ENCODE measurements at regions of chr15 and their contacts with region 1.

Region 1: GRCh38 chr15:85618956-85619491 is 175.7 kb downstream of the KLHL25 start:
- DNase-seq: peak; percentile 45 to 76 (median 61)
- H3K4me3 ChIP-seq: peak overlapping the region; percentile 17 to 36
- H3K4me3 Mint-ChIP-seq: no peak overlapping the region
- H3K27ac ChIP-seq: peak overlapping the region; percentile 57
- H3K27ac Mint-ChIP-seq: no peak overlapping the region
- H3K4me1 ChIP-seq: peaks cover 68% of the 10 kb centered on the region
- H3K4me1 Mint-ChIP-seq: peaks cover 31 to 46% (median 36%) of the 10 kb centered on the region in 4 donors
- H3K27me3 ChIP-seq: no peaks in the 10 kb centered on the region
- H3K27me3 Mint-ChIP-seq: no peaks in the 10 kb centered on the region

Region 2: DNA sequence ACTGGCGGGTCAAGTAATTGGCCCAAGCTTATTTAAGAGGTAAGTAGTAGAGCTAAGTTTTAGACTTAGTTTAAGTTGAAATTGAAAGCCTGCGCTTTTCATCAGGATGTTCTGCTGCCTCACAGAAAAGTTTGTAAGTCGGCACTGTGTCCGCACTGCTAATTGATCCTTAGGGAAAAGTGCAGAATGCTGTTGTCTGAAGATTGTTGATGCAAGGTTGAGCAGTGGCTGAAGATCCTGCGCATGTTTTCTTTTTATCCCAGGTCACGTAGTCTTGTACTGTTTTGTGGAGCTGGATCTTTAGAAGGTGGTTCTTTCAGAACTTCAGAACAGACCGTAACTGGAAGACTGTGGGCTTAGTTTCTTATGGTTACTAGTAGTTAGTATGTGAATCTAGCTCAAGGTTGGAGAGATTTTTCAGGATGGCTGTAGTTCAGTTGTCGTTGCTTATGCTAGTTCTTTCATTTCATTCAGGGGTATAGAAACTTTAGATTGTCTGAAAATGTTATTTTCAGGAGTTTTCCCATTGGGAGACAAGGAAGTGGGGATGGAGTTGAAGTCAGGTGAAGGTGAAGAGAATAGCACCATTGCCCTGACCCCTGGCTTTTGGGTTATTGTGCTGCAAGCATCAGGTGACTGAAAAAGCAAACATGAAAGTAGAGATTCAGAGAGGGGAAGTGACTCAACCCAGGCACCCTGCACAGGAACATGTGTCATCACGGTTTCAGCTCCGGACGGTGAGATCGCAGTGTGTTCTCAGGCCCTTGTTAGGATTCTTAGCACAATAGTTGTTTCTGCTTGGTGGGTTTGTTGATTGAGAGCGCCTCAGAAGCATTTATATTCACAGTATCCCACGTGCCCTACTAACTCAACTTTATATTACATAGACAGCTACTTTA is 205.8 kb before region 1 on chr15:
- CTCF ChIA-PET with region 1: no interaction called
- POLR2A ChIA-PET with region 1: no interaction called
- intact Hi-C with region 1: loop called (anchors 2 kb)
- DNase-seq: peak; percentile 45 to 86 (median 54)
- H3K4me3 ChIP-seq: no peak overlapping the region
- H3K4me3 Mint-ChIP-seq: peak overlapping the region in 7 of 8 donors; percentile 47 to 87 (median 65)
- H3K27ac ChIP-seq: peak overlapping the region; percentile 40
- H3K27ac Mint-ChIP-seq: peak overlapping the region; percentile 78 to 96 (median 92)
- H3K4me1 ChIP-seq: peaks cover 32% of the 10 kb centered on the region
- H3K4me1 Mint-ChIP-seq: peaks cover 50 to 75% (median 58%) of the 10 kb centered on the region in 4 donors
- H3K27me3 ChIP-seq: no peaks in the 10 kb centered on the region
- H3K27me3 Mint-ChIP-seq: no peaks in the 10 kb centered on the region

Region 3: DNA sequence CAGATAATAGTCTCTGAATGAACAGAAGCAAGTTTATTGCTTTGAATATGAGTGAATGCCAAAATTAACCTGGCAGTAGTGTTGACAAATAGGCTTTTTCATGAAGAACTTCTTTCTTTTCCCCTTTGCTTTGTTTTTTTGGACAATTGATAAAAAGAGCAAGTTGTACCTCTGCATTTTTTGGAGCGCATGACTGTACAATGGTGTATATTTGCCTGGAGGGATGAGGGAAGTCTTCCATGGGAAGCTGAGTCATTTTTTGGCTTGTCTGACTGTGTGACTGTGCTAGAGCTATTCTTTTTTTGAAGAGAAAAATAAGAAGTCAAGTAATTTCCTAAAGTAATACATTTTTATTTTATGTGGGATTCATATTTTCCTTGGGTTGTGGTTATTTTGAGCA is 11.2 kb before region 1 on chr15:
- CTCF ChIA-PET with region 1: interaction called, 20 read pairs
- POLR2A ChIA-PET with region 1: interaction called, 7 read pairs
- intact Hi-C with region 1: no loop called
- DNase-seq: no peak
- H3K4me3 ChIP-seq: no peak overlapping the region
- H3K4me3 Mint-ChIP-seq: no peak overlapping the region
- H3K27ac ChIP-seq: no peak overlapping the region
- H3K27ac Mint-ChIP-seq: peak overlapping the region in 2 of 7 donors; percentile 65 to 85
- H3K4me1 ChIP-seq: peaks cover 18% of the 10 kb centered on the region
- H3K4me1 Mint-ChIP-seq: peaks cover 23 to 35% (median 30%) of the 10 kb centered on the region in 4 donors
- H3K27me3 ChIP-seq: no peaks in the 10 kb centered on the region
- H3K27me3 Mint-ChIP-seq: no peaks in the 10 kb centered on the region

Region 4: DNA sequence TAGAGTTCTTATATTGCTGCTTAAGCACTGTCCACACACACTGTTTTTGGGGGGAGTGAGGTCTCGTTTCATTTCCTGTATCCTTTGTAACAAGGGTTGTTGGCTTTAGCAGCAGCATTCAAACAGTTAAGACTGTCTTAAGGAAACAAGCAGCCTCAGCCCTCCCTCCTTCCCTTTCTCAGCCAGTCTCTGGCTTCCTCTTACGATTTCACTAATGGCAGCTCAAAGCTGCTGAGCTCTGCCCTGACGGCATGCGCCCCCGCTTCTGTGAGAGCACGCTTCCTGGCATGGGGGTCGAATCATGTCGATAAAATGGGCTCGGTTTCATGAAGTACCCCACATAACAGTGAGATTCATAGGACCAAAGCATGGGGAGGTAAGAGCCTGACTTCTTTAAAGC is 70.7 kb after region 1 on chr15:
- CTCF ChIA-PET with region 1: interaction called, 27 read pairs
- POLR2A ChIA-PET with region 1: interaction called, 72 read pairs
- intact Hi-C with region 1: loop called (anchors 1 kb)
- DNase-seq: peak; percentile 65 to 77 (median 71)
- H3K4me3 ChIP-seq: peak overlapping the region; percentile 71 to 80
- H3K4me3 Mint-ChIP-seq: peak overlapping the region; percentile 96 to 100 (median 98)
- H3K27ac ChIP-seq: peak overlapping the region; percentile 83
- H3K27ac Mint-ChIP-seq: peak overlapping the region; percentile 96 to 100 (median 98)
- H3K4me1 ChIP-seq: peaks cover 73% of the 10 kb centered on the region
- H3K4me1 Mint-ChIP-seq: peaks cover 59 to 75% (median 64%) of the 10 kb centered on the region in 4 donors
- H3K27me3 ChIP-seq: no peaks in the 10 kb centered on the region
- H3K27me3 Mint-ChIP-seq: no peaks in the 10 kb centered on the region

Region 5: GRCh38 chr15:85707519-85708338 is 88.7 kb after region 1 on chr15:
- CTCF ChIA-PET with region 1: interaction called, 9 read pairs
- POLR2A ChIA-PET with region 1: interaction called, 60 read pairs
- intact Hi-C with region 1: loop called (anchors 1 kb)
- DNase-seq: peak in 2 of 5 donors; percentile 55 to 73
- H3K4me3 ChIP-seq: peak overlapping the region; percentile 42 to 61
- H3K4me3 Mint-ChIP-seq: peak overlapping the region; percentile 83 to 95 (median 87)
- H3K27ac ChIP-seq: peak overlapping the region; percentile 86
- H3K27ac Mint-ChIP-seq: peak overlapping the region; percentile 96 to 100 (median 97)
- H3K4me1 ChIP-seq: peaks cover 72% of the 10 kb centered on the region
- H3K4me1 Mint-ChIP-seq: peaks cover 69 to 89% (median 80%) of the 10 kb centered on the region in 4 donors
- H3K27me3 ChIP-seq: no peaks in the 10 kb centered on the region
- H3K27me3 Mint-ChIP-seq: no peaks in the 10 kb centered on the region

Region 6: DNA sequence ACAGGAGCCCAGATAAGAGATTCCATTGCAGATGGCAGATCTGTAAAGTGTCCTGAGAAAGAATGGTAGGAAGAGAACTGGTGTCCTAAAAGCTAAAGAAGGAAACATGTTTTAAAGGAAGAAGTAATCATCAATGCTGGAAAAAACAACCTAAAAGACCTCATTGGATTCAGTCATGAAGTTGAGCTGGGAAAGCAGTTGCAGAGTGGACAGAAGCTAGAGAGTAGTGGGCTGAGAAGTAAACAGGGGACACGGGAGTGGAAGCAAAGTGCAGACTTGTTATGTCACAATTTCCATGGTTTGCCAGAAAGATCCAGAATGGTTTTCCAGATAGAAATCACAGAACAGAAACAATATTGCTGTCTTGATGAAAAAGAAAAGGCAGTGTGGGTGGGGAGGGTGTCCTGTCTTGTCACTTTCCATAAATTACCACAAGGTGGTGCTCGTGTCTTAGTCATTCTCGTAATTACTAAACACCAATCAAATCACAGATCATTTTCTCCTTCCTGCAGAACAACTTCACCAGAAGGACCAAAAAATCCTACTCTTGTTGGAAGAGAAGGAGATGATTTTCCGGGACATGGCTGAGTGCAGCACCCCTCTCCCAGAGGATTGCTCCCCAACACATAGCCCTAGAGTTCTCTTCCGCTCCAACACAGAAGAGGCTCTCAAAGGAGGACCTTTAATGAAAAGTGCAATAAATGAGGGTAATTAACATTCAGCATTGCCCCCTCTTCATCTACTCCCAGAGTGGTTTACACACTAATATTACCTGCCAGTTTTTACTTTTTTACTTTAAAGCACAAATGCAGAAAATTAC is 111.2 kb after region 1 on chr15:
- CTCF ChIA-PET with region 1: interaction called, 21 read pairs
- POLR2A ChIA-PET with region 1: interaction called, 4 read pairs
- intact Hi-C with region 1: no loop called
- DNase-seq: peak; percentile 61 to 68 (median 64)
- H3K4me3 ChIP-seq: no peak overlapping the region
- H3K4me3 Mint-ChIP-seq: no peak overlapping the region
- H3K27ac ChIP-seq: no peak overlapping the region
- H3K27ac Mint-ChIP-seq: peak overlapping the region; percentile 43 to 92 (median 83)
- H3K4me1 ChIP-seq: peaks cover 9% of the 10 kb centered on the region
- H3K4me1 Mint-ChIP-seq: peaks cover 9 to 16% (median 14%) of the 10 kb centered on the region in 4 donors
- H3K27me3 ChIP-seq: no peaks in the 10 kb centered on the region
- H3K27me3 Mint-ChIP-seq: no peaks in the 10 kb centered on the region

Region 7: DNA sequence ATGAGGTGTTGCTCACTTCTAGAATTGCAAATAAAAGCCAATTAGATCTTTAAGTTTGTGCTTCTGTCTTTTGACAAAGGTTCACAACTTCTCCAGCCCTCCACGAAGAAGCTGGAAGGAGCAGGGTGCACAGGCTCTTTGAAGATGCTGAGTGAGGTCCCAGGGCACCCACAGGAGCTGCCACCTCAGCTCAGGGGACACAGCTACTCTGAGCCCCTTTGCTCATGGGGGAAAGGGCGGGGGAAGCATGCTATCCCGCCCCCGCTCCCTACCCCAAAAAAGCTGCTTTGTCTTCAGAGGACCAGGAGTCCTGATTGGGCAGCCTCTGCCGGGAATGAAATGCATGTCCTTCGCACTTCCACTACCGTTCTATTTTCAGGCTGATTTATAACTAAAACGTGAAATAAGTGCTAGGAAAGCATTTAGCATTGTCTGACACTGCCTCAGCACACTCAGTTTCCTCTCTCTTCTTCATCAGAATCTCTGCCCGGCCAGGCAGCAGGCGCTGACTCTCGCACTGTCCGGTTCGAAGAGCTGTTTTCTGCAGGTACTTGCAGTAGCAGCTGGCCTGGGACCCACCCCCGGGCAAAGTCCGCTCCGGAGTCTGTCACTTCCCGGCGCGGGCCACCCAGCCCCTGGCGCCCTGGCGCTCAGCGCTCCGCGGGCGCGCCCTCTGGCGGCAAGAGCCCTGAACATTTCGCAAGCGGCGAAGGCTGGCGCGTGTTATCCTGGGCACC is 221.2 kb after region 1 on chr15:
- CTCF ChIA-PET with region 1: interaction called, 3 read pairs
- POLR2A ChIA-PET with region 1: no interaction called
- intact Hi-C with region 1: loop called (anchors 1 kb)
- DNase-seq: peak; percentile 65 to 80 (median 70)
- H3K4me3 ChIP-seq: no peak overlapping the region
- H3K4me3 Mint-ChIP-seq: peak overlapping the region; percentile 31 to 84 (median 67)
- H3K27ac ChIP-seq: no peak overlapping the region
- H3K27ac Mint-ChIP-seq: peak overlapping the region in 2 of 7 donors; percentile 10 to 12
- H3K4me1 ChIP-seq: peaks cover 10% of the 10 kb centered on the region
- H3K4me1 Mint-ChIP-seq: peaks cover 0 to 6% (median 3%) of the 10 kb centered on the region in 4 donors
- H3K27me3 ChIP-seq: no peaks in the 10 kb centered on the region
- H3K27me3 Mint-ChIP-seq: peaks cover under 1 to 6% of the 10 kb centered on the region in 2 donors

Region 8: GRCh38 chr15:86178845-86179244 is 559.8 kb after region 1 on chr15:
- CTCF ChIA-PET with region 1: no interaction called
- POLR2A ChIA-PET with region 1: no interaction called
- intact Hi-C with region 1: no loop called
- DNase-seq: peak in 1 of 5 donors; percentile 1
- H3K4me3 ChIP-seq: no peak overlapping the region
- H3K4me3 Mint-ChIP-seq: no peak overlapping the region
- H3K27ac ChIP-seq: no peak overlapping the region
- H3K27ac Mint-ChIP-seq: no peak overlapping the region
- H3K4me1 ChIP-seq: no peaks in the 10 kb centered on the region
- H3K4me1 Mint-ChIP-seq: peaks cover 0 to 2% (median 0%) of the 10 kb centered on the region in 4 donors
- H3K27me3 ChIP-seq: no peaks in the 10 kb centered on the region
- H3K27me3 Mint-ChIP-seq: peaks cover 4 to 18% of the 10 kb centered on the region in 2 donors

Region 9: GRCh38 chr15:86284635-86285034 is 665.6 kb after region 1 on chr15:
- CTCF ChIA-PET with region 1: no interaction called
- POLR2A ChIA-PET with region 1: no interaction called
- intact Hi-C with region 1: no loop called
- DNase-seq: no peak
- H3K4me3 ChIP-seq: no peak overlapping the region
- H3K4me3 Mint-ChIP-seq: no peak overlapping the region
- H3K27ac ChIP-seq: no peak overlapping the region
- H3K27ac Mint-ChIP-seq: no peak overlapping the region
- H3K4me1 ChIP-seq: no peaks in the 10 kb centered on the region
- H3K4me1 Mint-ChIP-seq: no peaks in the 10 kb centered on the region
- H3K27me3 ChIP-seq: no peaks in the 10 kb centered on the region
- H3K27me3 Mint-ChIP-seq: peaks cover 0 to 2% of the 10 kb centered on the region in 2 donors